Activated CD4-positive, alpha-beta memory T cell treated with anti-CD3 and anti-CD28 coated beads for 36 hours (primary cell): ENCODE measurements at regions of chr2 and their contacts with region 1.

Region 1: DNA sequence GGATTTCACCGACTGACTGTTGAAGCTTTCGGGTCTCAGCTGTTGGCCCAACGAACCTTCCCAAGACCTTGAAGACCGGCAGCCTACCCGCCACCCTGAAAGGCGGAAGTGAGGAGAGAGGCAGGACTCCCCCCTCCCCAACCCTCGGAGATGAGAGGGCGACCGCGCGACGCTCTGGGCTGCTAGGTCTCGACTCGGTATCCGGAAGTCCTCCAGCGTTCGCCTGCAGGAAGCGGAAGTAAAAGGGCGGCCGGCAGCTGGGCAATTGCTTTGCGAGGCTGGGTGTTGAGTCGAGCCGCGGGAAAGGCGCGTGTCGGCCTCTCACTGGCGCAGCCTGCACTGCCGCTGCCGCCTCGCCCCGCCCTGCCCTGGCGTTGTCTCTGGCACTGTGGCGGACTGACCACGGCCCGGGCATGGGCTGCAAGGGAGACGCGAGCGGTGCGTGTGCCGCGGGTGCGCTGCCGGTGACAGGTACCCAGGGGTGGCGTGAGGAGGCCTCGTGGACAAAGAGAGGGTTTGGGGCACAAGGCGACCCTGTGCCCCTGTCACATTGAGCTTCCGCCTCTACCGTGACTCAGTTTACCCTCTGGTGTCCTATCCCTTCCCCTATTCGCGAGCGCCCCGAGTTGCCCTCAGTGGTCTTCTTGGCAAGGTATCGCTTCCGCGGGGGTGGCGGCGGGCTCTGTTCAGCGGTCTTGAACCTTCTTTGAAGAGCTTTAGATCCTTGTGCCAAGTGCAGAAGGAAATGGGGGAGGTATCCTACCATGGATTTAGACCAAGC is at the start of gene UGGT1:
- DNase-seq: peak; percentile 96
- H3K4me3 Mint-ChIP-seq: peak within 1 kb of the TSS; percentile 91
- H3K27ac Mint-ChIP-seq: peak within 1 kb of the TSS; percentile 92
- H3K4me1 Mint-ChIP-seq: peaks cover 41% of the 10 kb centered on the region
- H3K27me3 Mint-ChIP-seq: no peaks in the 10 kb centered on the region
- total RNA-seq, gene UGGT1: 50.8 to 53.2 TPM

Region 2: GRCh38 chr2:127701193-127701650 is 389.9 kb before region 1 on chr2 and contains the start of gene SFT2D3:
- CTCF ChIA-PET with region 1: no interaction called
- POLR2A ChIA-PET with region 1: interaction called, 3 read pairs
- intact Hi-C with region 1: loop called (anchors 1 kb)
- DNase-seq: peak; percentile 95
- H3K4me3 Mint-ChIP-seq: peak within 1 kb of the TSS; percentile 92
- H3K27ac Mint-ChIP-seq: peak within 1 kb of the TSS; percentile 95
- H3K4me1 Mint-ChIP-seq: peaks cover 37% of the 10 kb centered on the region
- H3K27me3 Mint-ChIP-seq: no peaks in the 10 kb centered on the region
- total RNA-seq, gene SFT2D3: 3.1 to 3.6 TPM

Region 3: GRCh38 chr2:127857265-127857808 is 233.8 kb before region 1 on chr2:
- CTCF ChIA-PET with region 1: no interaction called
- POLR2A ChIA-PET with region 1: no interaction called
- intact Hi-C with region 1: loop called (anchors 10 kb)
- DNase-seq: peak; percentile 14
- H3K4me3 Mint-ChIP-seq: peak overlapping the region; percentile 88
- H3K27ac Mint-ChIP-seq: peak overlapping the region; percentile 77
- H3K4me1 Mint-ChIP-seq: peaks cover 51% of the 10 kb centered on the region
- H3K27me3 Mint-ChIP-seq: no peaks in the 10 kb centered on the region

Region 4: GRCh38 chr2:127884436-127885345 is 206.4 kb before region 1 on chr2:
- CTCF ChIA-PET with region 1: no interaction called
- POLR2A ChIA-PET with region 1: no interaction called
- intact Hi-C with region 1: loop called (anchors 5 kb)
- DNase-seq: no peak
- H3K4me3 Mint-ChIP-seq: peak overlapping the region; percentile 84
- H3K27ac Mint-ChIP-seq: peak overlapping the region; percentile 77
- H3K4me1 Mint-ChIP-seq: peaks cover 49% of the 10 kb centered on the region
- H3K27me3 Mint-ChIP-seq: no peaks in the 10 kb centered on the region

Region 5: DNA sequence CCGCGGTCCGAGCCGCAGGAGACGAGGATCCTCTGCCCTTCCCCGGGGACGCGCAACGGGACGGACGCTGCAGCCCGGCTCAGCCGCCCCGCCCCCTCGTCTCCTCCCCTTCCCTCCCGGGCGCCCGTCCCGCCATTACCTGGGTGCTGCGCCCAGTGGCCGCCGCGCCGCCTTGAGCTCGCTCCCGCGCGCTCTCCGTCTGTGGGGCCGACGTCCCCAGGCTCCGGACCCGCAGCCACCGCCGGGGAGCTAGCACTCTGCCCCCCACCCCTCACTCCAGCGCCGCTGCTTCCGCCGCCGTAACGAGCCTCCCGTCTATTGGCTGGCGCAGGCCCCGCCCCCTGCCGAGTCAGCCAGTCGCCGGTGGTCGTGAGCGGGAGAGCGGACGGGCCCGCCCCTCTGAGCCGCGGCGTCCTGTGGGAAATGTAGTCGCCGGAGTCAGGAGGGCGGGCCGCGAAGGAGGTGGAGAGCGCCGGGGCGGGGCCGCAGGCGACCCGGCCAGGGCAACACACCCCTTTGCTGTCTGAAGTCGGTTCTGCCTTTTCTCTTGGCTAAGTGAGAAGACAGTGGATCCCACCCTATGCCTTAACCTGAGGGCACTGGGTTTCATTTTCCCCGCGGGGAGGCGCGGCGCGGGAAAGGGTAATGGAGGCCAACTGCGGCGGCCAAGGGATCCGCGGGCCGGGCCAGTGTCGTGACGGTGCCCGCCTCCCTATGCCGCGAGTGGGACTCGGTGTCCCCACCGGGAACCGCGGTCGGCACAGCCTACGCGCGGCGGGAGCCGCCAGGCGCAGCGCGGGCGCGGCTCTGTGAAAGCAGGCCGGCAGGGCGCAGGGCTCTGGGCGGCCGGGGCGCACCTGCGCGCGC is 63.1 kb before region 1 on chr2 and contains the start of gene SAP130:
- CTCF ChIA-PET with region 1: interaction called, 5 read pairs
- POLR2A ChIA-PET with region 1: interaction called, 17 read pairs
- intact Hi-C with region 1: loop called (anchors 1 kb)
- DNase-seq: peak; percentile 99
- H3K4me3 Mint-ChIP-seq: peak within 1 kb of the TSS; percentile 97
- H3K27ac Mint-ChIP-seq: peak within 1 kb of the TSS; percentile 80
- H3K4me1 Mint-ChIP-seq: peaks cover 16% of the 10 kb centered on the region
- H3K27me3 Mint-ChIP-seq: no peaks in the 10 kb centered on the region
- total RNA-seq, gene SAP130: 21.8 to 25.7 TPM

Region 6: GRCh38 chr2:128105072-128105471 is 13.9 kb after region 1 on chr2:
- CTCF ChIA-PET with region 1: interaction called, 3 read pairs
- POLR2A ChIA-PET with region 1: interaction called, 6 read pairs
- intact Hi-C with region 1: loop called (anchors 2 kb)
- DNase-seq: no peak
- H3K4me3 Mint-ChIP-seq: no peak overlapping the region
- H3K27ac Mint-ChIP-seq: no peak overlapping the region
- H3K4me1 Mint-ChIP-seq: peaks cover 21% of the 10 kb centered on the region
- H3K27me3 Mint-ChIP-seq: no peaks in the 10 kb centered on the region

Region 7: GRCh38 chr2:128449226-128450061 is 358.3 kb after region 1 on chr2:
- CTCF ChIA-PET with region 1: no interaction called
- POLR2A ChIA-PET with region 1: no interaction called
- intact Hi-C with region 1: no loop called
- DNase-seq: no peak
- H3K4me3 Mint-ChIP-seq: no peak overlapping the region
- H3K27ac Mint-ChIP-seq: no peak overlapping the region
- H3K4me1 Mint-ChIP-seq: no peaks in the 10 kb centered on the region
- H3K27me3 Mint-ChIP-seq: peaks cover 3% of the 10 kb centered on the region